Naive thymus-derived CD8-positive, alpha-beta T cell (primary cell): ENCODE measurements at regions of chr17 and their contacts with region 1.

Region 1: GRCh38 chr17:40582328-40582901 is 17.1 kb upstream of the CCR7 start:
- DNase-seq: peak; percentile 56 to 93 (median 80)
- ATAC-seq: peak; percentile 84 to 92
- H3K4me3 Mint-ChIP-seq: peak overlapping the region; percentile 52 to 87 (median 72)
- H3K27ac Mint-ChIP-seq: peak overlapping the region; percentile 88 to 99 (median 97)
- H3K4me1 Mint-ChIP-seq: peaks cover 59 to 96% (median 94%) of the 10 kb centered on the region in 4 donors
- H3K27me3 Mint-ChIP-seq: no peaks in the 10 kb centered on the region

Region 2: DNA sequence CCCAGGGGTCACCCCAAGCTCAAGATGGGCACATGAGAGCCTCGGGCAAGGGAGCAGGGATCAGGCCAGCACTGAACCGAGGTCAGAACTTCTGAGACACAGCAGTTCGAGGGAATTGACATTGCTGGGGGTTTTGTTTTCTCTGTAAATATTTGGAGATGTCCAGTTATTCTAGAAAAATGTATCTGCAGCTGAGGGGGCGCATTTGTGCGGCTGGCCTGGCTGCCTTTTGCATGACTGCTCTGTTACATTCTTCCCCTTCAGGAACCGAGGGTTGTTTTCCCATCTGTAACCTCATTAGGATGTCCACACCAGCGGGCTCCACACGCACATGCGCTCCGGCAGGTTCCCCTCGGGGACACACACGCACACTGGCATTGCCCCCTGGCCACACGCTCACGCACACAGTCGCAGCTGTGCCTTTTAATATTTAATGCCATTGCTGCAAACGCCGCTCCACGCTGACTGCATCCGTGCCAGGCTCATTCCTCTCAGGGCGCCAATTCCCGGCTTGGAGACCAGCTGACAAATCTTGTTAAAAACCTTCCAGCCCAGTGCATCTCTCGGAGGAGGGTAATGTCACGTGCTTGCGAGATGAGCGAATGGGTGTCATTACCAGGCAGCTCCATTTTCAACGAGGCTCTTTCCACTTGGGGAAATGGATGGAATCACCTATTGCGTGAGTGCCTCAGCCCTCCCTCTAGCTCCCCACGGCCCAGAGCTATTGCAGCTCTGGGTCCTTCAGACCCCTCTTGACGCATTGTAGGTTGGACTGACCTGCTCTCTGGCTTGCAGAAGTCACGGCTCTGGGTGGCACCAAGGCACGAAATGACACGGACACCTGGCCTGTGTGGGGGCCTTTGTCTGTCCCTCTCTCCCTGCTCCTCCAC is 30.3 kb before region 1 on chr17:
- POLR2A ChIA-PET with region 1: interaction called, 481 read pairs
- DNase-seq: peak in 3 of 10 donors; percentile 34 to 64 (median 36)
- ATAC-seq: peak in 1 of 2 donors; percentile 1
- H3K4me3 Mint-ChIP-seq: peak overlapping the region in 9 of 10 donors; percentile 22 to 91 (median 83)
- H3K27ac Mint-ChIP-seq: peak overlapping the region; percentile 90 to 100 (median 96)
- H3K4me1 Mint-ChIP-seq: peaks cover 66 to 100% (median 100%) of the 10 kb centered on the region in 4 donors
- H3K27me3 Mint-ChIP-seq: no peaks in the 10 kb centered on the region

Region 3: GRCh38 chr17:40608061-40608588 is 25.7 kb after region 1 on chr17:
- POLR2A ChIA-PET with region 1: interaction called, 116 read pairs
- DNase-seq: peak in 8 of 10 donors; percentile 45 to 88 (median 79)
- ATAC-seq: peak; percentile 53 to 70
- H3K4me3 Mint-ChIP-seq: peak overlapping the region; percentile 65 to 86 (median 80)
- H3K27ac Mint-ChIP-seq: peak overlapping the region; percentile 95 to 100 (median 100)
- H3K4me1 Mint-ChIP-seq: peaks cover 44 to 98% (median 93%) of the 10 kb centered on the region in 4 donors
- H3K27me3 Mint-ChIP-seq: no peaks in the 10 kb centered on the region

Region 4: GRCh38 chr17:40615295-40615988 is 33.0 kb after region 1 on chr17:
- POLR2A ChIA-PET with region 1: interaction called, 97 read pairs
- DNase-seq: peak in 9 of 10 donors; percentile 48 to 81 (median 67)
- ATAC-seq: peak; percentile 59
- H3K4me3 Mint-ChIP-seq: peak overlapping the region; percentile 67 to 90 (median 85)
- H3K27ac Mint-ChIP-seq: peak overlapping the region; percentile 93 to 100 (median 98)
- H3K4me1 Mint-ChIP-seq: peaks cover 35 to 81% (median 81%) of the 10 kb centered on the region in 4 donors
- H3K27me3 Mint-ChIP-seq: no peaks in the 10 kb centered on the region

Region 5: GRCh38 chr17:40659911-40660310 is 77.5 kb after region 1 on chr17:
- POLR2A ChIA-PET with region 1: no interaction called
- DNase-seq: peak in 4 of 10 donors; percentile 4 to 39 (median 28)
- ATAC-seq: peak; percentile 59 to 78
- H3K4me3 Mint-ChIP-seq: peak overlapping the region in 5 of 10 donors; percentile 21 to 44 (median 34)
- H3K27ac Mint-ChIP-seq: peak overlapping the region in 2 of 10 donors; percentile 2 to 60
- H3K4me1 Mint-ChIP-seq: peaks cover 5 to 14% (median 9%) of the 10 kb centered on the region in 4 donors
- H3K27me3 Mint-ChIP-seq: peaks cover 3 to 32% (median 14%) of the 10 kb centered on the region in 5 donors

Region 6: DNA sequence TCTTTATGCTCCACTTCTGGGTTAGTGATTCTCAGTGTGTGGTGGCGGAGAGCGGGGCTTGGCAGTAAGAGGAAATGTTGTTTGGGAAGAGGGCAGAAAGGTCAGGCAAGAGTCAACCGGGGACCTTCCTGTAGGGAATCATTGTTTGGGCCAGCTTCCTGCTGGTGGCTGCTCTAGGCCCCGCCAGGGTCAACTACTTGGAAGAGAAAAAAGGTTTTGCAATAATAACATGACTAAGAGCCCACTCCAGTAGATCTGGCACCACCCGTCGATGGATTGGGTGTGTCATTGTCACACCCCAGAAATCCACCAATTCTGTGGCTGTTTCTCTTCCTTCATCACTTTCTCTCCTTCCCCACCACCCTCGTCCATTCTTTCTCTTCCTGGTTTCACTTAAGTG is 125.3 kb after region 1 on chr17:
- POLR2A ChIA-PET with region 1: no interaction called
- DNase-seq: no peak
- ATAC-seq: no peak
- H3K4me3 Mint-ChIP-seq: no peak overlapping the region
- H3K27ac Mint-ChIP-seq: no peak overlapping the region
- H3K4me1 Mint-ChIP-seq: no peaks in the 10 kb centered on the region
- H3K27me3 Mint-ChIP-seq: peaks cover 13 to 42% (median 19%) of the 10 kb centered on the region in 5 donors